ENCODE measurements at regions of chr1 and their contacts with region 1.

Region 1: GRCh38 chr1:181424786-181425403 is 58.4 kb upstream of the CACNA1E start:
- DNase-seq: peak; percentile 71
- H3K4me3 ChIP-seq: no peak overlapping the region
- H3K27ac ChIP-seq: no peak overlapping the region
- H3K4me1 ChIP-seq: no peaks in the 10 kb centered on the region
- H3K27me3 ChIP-seq: no peaks in the 10 kb centered on the region
- CTCF ChIP-seq: peak; percentile 95 to 99
- POLR2A ChIP-seq: no peak

Region 2: DNA sequence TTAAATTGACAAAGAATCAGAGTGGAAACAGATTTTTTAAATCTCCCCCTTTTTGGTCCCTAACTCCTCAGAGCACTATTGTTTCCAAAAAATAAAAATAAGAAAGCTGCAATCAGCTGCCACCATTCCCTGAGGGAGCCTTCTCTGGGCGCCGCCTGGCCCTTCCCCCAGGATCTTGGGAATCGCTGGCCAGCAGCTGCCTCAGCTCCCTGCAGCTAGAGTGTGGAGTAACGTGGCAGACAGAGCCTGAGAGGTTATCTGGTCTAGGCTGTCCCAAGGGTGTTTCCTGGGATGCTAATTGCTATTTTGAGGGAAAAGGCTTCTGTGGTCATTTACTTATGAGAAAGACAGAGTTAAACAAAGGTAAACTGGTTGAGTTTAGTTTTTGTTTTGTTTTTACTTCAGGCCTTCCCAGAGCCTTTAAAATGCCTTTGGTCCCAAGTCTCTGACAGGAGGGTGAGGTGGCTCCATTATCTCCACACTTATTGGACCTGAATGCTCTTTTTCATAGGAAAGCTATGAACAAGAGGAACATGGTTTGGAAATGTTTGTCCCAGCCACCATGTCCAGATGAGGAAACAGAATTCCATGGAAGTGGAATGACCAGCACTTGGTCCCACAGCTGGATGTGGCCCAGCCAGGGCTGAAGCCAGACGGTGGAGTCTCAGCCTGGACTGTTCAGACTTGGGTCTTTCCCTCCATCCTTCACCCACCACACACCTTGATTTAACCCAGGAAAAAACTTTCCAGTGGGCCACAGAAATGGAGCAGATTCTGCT is 526.3 kb before region 1 on chr1:
- CTCF ChIA-PET with region 1: no interaction called
- POLR2A ChIA-PET with region 1: no interaction called
- dilution Hi-C with region 1: no loop called
- intact Hi-C with region 1: loop called (anchors 10 kb)
- DNase-seq: no peak
- H3K4me3 ChIP-seq: no peak overlapping the region
- H3K27ac ChIP-seq: no peak overlapping the region
- H3K4me1 ChIP-seq: no peaks in the 10 kb centered on the region
- H3K27me3 ChIP-seq: no peaks in the 10 kb centered on the region
- CTCF ChIP-seq: no peak
- POLR2A ChIP-seq: no peak

Region 3: GRCh38 chr1:181206513-181206912 is 218.4 kb before region 1 on chr1:
- CTCF ChIA-PET with region 1: interaction called, 10 read pairs
- POLR2A ChIA-PET with region 1: no interaction called
- dilution Hi-C with region 1: loop called (anchors 25 kb)
- intact Hi-C with region 1: no loop called
- DNase-seq: no peak
- H3K4me3 ChIP-seq: no peak overlapping the region
- H3K27ac ChIP-seq: no peak overlapping the region
- H3K4me1 ChIP-seq: no peaks in the 10 kb centered on the region
- H3K27me3 ChIP-seq: no peaks in the 10 kb centered on the region
- CTCF ChIP-seq: no peak
- POLR2A ChIP-seq: no peak

Region 4: GRCh38 chr1:181232532-181232931 is 192.4 kb before region 1 on chr1:
- CTCF ChIA-PET with region 1: interaction called, 20 read pairs
- POLR2A ChIA-PET with region 1: no interaction called
- dilution Hi-C with region 1: no loop called
- intact Hi-C with region 1: no loop called
- DNase-seq: no peak
- H3K4me3 ChIP-seq: no peak overlapping the region
- H3K27ac ChIP-seq: no peak overlapping the region
- H3K4me1 ChIP-seq: no peaks in the 10 kb centered on the region
- H3K27me3 ChIP-seq: no peaks in the 10 kb centered on the region
- CTCF ChIP-seq: no peak
- POLR2A ChIP-seq: no peak

Region 5: GRCh38 chr1:181318022-181318857 is 106.7 kb before region 1 on chr1:
- CTCF ChIA-PET with region 1: no interaction called
- POLR2A ChIA-PET with region 1: no interaction called
- dilution Hi-C with region 1: loop called (anchors 25 kb)
- intact Hi-C with region 1: no loop called
- DNase-seq: no peak
- H3K4me3 ChIP-seq: no peak overlapping the region
- H3K27ac ChIP-seq: no peak overlapping the region
- H3K4me1 ChIP-seq: no peaks in the 10 kb centered on the region
- H3K27me3 ChIP-seq: peaks cover 31 to 38% of the 10 kb centered on the region in 2 experiments
- CTCF ChIP-seq: no peak
- POLR2A ChIP-seq: no peak

Region 6: GRCh38 chr1:181397845-181398244 is 27.1 kb before region 1 on chr1:
- CTCF ChIA-PET with region 1: interaction called, 10 read pairs
- POLR2A ChIA-PET with region 1: no interaction called
- dilution Hi-C with region 1: no loop called
- intact Hi-C with region 1: no loop called
- DNase-seq: no peak
- H3K4me3 ChIP-seq: no peak overlapping the region
- H3K27ac ChIP-seq: no peak overlapping the region
- H3K4me1 ChIP-seq: no peaks in the 10 kb centered on the region
- H3K27me3 ChIP-seq: no peaks in the 10 kb centered on the region
- CTCF ChIP-seq: no peak
- POLR2A ChIP-seq: no peak

Region 7: DNA sequence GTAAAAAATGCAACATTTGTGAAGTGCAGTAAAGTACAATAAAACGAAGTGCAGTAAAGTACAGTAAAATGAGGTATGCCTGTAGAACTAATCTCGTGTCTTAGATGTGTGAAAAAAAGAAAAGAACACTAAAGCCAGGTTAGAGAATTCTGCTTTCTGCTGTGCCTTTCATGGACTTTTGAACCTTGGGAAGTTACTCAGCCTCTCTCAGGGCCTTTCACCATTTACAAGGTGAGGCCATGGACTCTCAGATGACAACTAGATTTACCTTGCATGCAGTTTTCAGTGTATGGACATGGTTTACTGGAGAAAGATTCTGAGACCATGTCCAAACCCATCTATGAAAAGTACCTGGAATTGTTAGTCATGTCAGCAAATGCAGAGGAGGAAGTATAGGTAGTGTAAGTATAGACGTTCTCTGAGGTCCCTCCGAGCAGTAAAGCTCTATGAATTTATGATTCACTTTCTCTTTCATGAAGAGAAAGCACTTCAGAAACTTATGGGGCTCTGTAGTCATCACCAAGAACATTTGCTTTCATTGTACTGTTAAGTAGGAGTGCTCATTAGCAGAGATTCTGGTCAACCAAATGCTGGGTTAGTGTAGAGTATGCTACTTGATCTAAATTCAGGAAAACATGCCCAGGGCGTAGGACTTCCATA is 201.5 kb after region 1 on chr1:
- CTCF ChIA-PET with region 1: no interaction called
- POLR2A ChIA-PET with region 1: no interaction called
- dilution Hi-C with region 1: no loop called
- intact Hi-C with region 1: no loop called
- DNase-seq: no peak
- H3K4me3 ChIP-seq: no peak overlapping the region
- H3K27ac ChIP-seq: no peak overlapping the region
- H3K4me1 ChIP-seq: no peaks in the 10 kb centered on the region
- H3K27me3 ChIP-seq: no peaks in the 10 kb centered on the region
- CTCF ChIP-seq: no peak
- POLR2A ChIP-seq: no peak

Region 8: GRCh38 chr1:181898773-181899172 is 473.9 kb after region 1 on chr1:
- CTCF ChIA-PET with region 1: no interaction called
- POLR2A ChIA-PET with region 1: no interaction called
- dilution Hi-C with region 1: no loop called
- intact Hi-C with region 1: no loop called
- DNase-seq: no peak
- H3K4me3 ChIP-seq: no peak overlapping the region
- H3K27ac ChIP-seq: no peak overlapping the region
- H3K4me1 ChIP-seq: no peaks in the 10 kb centered on the region
- H3K27me3 ChIP-seq: no peaks in the 10 kb centered on the region
- CTCF ChIP-seq: no peak
- POLR2A ChIP-seq: no peak

Measured in endothelial cell of umbilical vein (primary cell).